Ascending aorta (tissue), 2 donors: ENCODE measurements at regions of chr6 and their contacts with region 1.

Region 1: DNA sequence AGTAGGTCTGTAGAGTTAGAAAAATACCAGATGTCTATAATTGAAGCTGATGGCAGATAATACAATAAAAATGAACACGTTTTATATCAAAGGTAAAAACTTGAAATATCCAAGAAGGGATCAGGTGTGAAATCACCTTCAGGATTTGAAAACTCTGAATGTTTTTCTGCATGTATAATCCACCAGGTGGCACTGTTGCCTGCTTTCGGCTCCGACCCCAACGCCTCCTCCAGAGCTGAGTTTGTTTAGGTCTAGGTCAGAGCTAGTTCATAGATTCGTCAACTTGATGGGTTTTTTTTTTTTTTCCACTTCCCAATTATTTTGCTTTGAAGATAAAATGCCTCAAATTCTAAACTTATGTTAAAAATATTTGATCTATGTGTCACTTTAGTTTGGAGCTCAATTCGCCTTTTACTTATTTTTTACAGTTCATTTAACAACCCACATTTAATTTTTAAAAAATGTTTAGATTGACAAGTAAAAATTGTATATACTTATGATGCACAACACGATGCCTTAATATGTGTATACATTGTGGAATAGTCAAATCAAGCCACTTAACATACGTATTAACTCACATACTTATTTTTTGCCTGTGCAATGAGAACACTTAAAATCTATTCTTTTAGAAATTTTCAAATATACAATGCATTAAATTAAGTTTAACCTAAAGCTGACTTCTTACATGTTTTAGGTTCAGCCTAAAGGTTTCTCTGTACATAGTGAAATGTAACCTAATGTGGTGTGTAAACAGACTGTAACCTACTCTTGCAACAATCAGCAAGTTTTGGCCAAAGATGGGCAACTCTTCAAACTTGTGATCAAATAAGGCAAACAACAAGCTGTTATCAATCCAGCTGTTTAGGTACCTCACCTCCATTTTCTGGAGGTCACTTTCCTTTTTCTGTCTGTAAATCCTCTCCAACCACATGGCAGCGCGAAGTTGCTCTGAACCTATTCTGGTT is 39.4 kb upstream of the ENPP4 start:
- DNase-seq: peak in 1 of 2 donors; percentile 73
- H3K4me3 ChIP-seq: no peak overlapping the region
- H3K27ac ChIP-seq: no peak overlapping the region
- H3K4me1 ChIP-seq: no peaks in the 10 kb centered on the region
- H3K27me3 ChIP-seq: no peaks in the 10 kb centered on the region
- CTCF ChIP-seq: peak; percentile 58 to 80 (median 67)

Region 2: GRCh38 chr6:46410334-46410953 is 320.0 kb after region 1 on chr6:
- intact Hi-C with region 1: loop called (anchors 2 kb)
- DNase-seq: no peak
- H3K4me3 ChIP-seq: no peak overlapping the region
- H3K27ac ChIP-seq: peak overlapping the region; percentile 21 to 30
- H3K4me1 ChIP-seq: peaks cover 6 to 61% of the 10 kb centered on the region in 2 donors
- H3K27me3 ChIP-seq: no peaks in the 10 kb centered on the region
- CTCF ChIP-seq: peak; percentile 41 to 78 (median 71)

Region 3: DNA sequence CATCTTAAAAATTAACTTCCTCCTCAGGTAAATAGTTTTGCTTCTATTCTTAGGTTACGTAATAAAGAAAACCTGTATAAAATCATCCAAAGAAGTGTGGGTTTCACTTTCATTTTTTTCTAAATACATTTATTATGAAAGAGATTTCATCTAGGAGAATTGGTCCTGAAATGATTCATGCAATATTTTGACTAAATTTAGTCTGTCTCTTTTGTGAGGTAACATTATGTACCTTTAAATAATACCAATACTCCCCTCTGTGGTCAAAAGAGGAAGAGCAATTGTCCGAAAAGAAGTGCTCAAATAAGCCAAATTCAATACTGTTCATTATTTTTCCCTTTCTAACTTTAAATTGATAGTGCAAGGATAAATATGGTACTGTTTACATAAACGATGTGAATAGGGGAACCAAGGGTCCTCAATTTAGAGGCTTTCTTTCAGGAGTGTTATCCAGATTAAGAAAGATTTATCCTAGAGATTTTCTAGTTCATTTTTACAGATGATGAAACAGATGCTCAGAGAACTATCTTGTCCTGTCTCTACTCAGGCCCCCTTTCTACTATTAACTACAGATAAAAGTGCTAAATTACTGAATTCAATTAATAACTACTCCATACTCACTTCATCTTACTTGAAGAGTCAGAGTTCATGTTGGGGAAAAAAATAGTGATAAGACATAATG is 536.0 kb after region 1 on chr6:
- intact Hi-C with region 1: loop called (anchors 2 kb)
- DNase-seq: no peak
- H3K4me3 ChIP-seq: peak overlapping the region; percentile 5 to 53
- H3K27ac ChIP-seq: no peak overlapping the region
- H3K4me1 ChIP-seq: no peaks in the 10 kb centered on the region
- H3K27me3 ChIP-seq: no peaks in the 10 kb centered on the region
- CTCF ChIP-seq: peak; percentile 62 to 74 (median 63)

Region 4: GRCh38 chr6:46781478-46782378 is 691.3 kb after region 1 on chr6:
- intact Hi-C with region 1: loop called (anchors 5 kb)
- DNase-seq: peak in 1 of 2 donors; percentile 77
- H3K4me3 ChIP-seq: no peak overlapping the region
- H3K27ac ChIP-seq: no peak overlapping the region
- H3K4me1 ChIP-seq: no peaks in the 10 kb centered on the region
- H3K27me3 ChIP-seq: no peaks in the 10 kb centered on the region
- CTCF ChIP-seq: peak in 2 of 3 experiments; percentile 48 to 64